Aorta (tissue), 5 donors: ENCODE measurements at regions of chr9 and their contacts with region 1.

Region 1: GRCh38 chr9:34665381-34666250 is 3.2 kb upstream of the CCL27 start:
- DNase-seq: peak; percentile 96 to 98
- ATAC-seq: peak; percentile 95
- H3K4me3 ChIP-seq: peak overlapping the region; percentile 55 to 73
- H3K27ac ChIP-seq: peak overlapping the region; percentile 25 to 96
- H3K4me1 ChIP-seq: no peaks in the 10 kb centered on the region
- H3K27me3 ChIP-seq: no peaks in the 10 kb centered on the region

Region 2: GRCh38 chr9:35071814-35072460 is 406.3 kb after region 1 on chr9:
- intact Hi-C with region 1: loop called in 1 of 2 experiments (anchors 10 kb)
- DNase-seq: peak; percentile 90 to 94
- ATAC-seq: peak; percentile 90
- H3K4me3 ChIP-seq: peak overlapping the region; percentile 61 to 93
- H3K27ac ChIP-seq: peak overlapping the region; percentile 93 to 98
- H3K4me1 ChIP-seq: peaks cover 0 to 4% of the 10 kb centered on the region in 2 donors
- H3K27me3 ChIP-seq: no peaks in the 10 kb centered on the region